A549 (cell line): ENCODE measurements at regions of chr12 and their contacts with region 1.

Region 1: GRCh38 chr12:1583421-1584078 is 10.8 kb downstream of the FBXL14 start:
- DNase-seq: peak; percentile 74 to 87
- ATAC-seq: peak; percentile 77 to 91; a peak in 5 of 6 replicates
- H3K4me3 ChIP-seq: no peak overlapping the region
- H3K27ac ChIP-seq: no peak overlapping the region
- H3K4me1 ChIP-seq: 0 out of 3 replicates have a peak, but pooled peaks cover 2% of the 10 kb centered on the region
- CTCF ChIP-seq: peak; percentile 96
- EP300 ChIP-seq: no peak
- POLR2A ChIP-seq: no peak
- RAD21 ChIP-seq: peak; percentile 97 to 98

Region 2: GRCh38 chr12:1108276-1108675 is 475.3 kb before region 1 on chr12:
- CTCF ChIA-PET with region 1: interaction called, 18 read pairs
- POLR2A ChIA-PET with region 1: no interaction called
- DNase-seq: no peak
- ATAC-seq: no peak
- H3K4me3 ChIP-seq: no peak overlapping the region
- H3K27ac ChIP-seq: no peak overlapping the region
- H3K4me1 ChIP-seq: no peaks in the 10 kb centered on the region
- CTCF ChIP-seq: no peak
- EP300 ChIP-seq: no peak
- POLR2A ChIP-seq: no peak
- RAD21 ChIP-seq: no peak

Region 3: DNA sequence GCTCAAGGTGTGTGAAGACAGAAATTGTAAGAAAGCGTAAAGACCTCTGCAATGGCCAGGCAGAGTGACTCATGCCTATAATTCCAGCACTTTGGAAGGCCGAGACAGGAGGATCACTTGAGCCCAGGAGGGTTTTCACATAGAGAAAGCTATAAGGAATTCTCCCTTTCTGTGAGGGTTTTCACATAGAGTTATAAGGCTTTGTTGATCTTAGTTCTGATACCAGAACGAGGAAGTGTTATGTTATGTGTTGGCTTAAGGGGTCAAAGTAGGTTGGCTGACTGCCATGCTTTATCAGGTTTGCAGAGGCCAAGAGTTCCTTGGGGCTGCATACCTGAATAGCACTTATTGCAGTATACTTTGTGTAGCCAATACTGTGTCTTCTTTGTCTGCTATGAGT is 453.4 kb before region 1 on chr12:
- CTCF ChIA-PET with region 1: interaction called, 22 read pairs
- POLR2A ChIA-PET with region 1: no interaction called
- DNase-seq: peak in 1 of 2 experiments; percentile 53
- ATAC-seq: peak in 1 of 2 experiments; percentile 57; a peak in 4 of 6 replicates
- H3K4me3 ChIP-seq: no peak overlapping the region
- H3K27ac ChIP-seq: no peak overlapping the region
- H3K4me1 ChIP-seq: peaks cover 7% of the 10 kb centered on the region; the same call in 1 of the 3 replicates
- CTCF ChIP-seq: no peak
- EP300 ChIP-seq: no peak
- POLR2A ChIP-seq: no peak
- RAD21 ChIP-seq: no peak

Region 4: DNA sequence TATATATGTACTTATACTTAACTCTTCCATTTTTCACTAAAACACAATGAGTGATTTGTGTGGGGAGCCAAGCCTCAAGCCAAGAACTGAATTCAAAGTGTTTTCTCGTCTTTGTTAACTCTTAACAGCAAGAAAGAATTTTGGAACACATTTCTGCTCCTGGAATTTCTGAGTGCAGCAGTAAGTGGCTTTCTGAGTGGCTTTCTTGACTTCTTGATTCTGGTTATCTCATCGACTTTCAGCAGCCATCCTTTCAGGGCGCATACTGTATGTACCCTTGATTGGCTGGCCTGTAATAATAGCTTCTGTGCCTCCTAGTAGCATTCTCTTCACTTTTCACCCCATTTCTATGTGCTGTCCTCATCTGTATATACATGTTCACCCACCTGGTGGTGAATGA is 146.6 kb before region 1 on chr12:
- CTCF ChIA-PET with region 1: no interaction called
- POLR2A ChIA-PET with region 1: no interaction called
- DNase-seq: no peak
- ATAC-seq: no peak
- H3K4me3 ChIP-seq: no peak overlapping the region
- H3K27ac ChIP-seq: no peak overlapping the region
- H3K4me1 ChIP-seq: no peaks in the 10 kb centered on the region
- CTCF ChIP-seq: no peak
- EP300 ChIP-seq: no peak
- POLR2A ChIP-seq: no peak
- RAD21 ChIP-seq: no peak

Region 5: GRCh38 chr12:1594261-1595025 is 10.9 kb after region 1 on chr12 and contains the start of gene FBXL14:
- CTCF ChIA-PET with region 1: interaction called, 30 read pairs
- POLR2A ChIA-PET with region 1: interaction called, 3 read pairs
- DNase-seq: peak; percentile 76 to 87
- ATAC-seq: peak; percentile 79 to 84
- H3K4me3 ChIP-seq: peak within 1 kb of the TSS; percentile 68
- H3K27ac ChIP-seq: peak within 1 kb of the TSS; percentile 91 to 99
- H3K4me1 ChIP-seq: peaks cover 38% of the 10 kb centered on the region
- CTCF ChIP-seq: no peak
- EP300 ChIP-seq: no peak
- POLR2A ChIP-seq: peak; percentile 65
- RAD21 ChIP-seq: no peak
- polyA plus RNA-seq, gene FBXL14: 6.7 and 8.2 TPM in 2 replicates

Region 6: GRCh38 chr12:1706633-1706981 is 123.1 kb after region 1 on chr12:
- CTCF ChIA-PET with region 1: no interaction called
- POLR2A ChIA-PET with region 1: no interaction called
- DNase-seq: peak in 1 of 2 experiments; percentile 22
- ATAC-seq: peak in 1 of 2 experiments; percentile 29; a peak in 3 of 6 replicates
- H3K4me3 ChIP-seq: no peak overlapping the region
- H3K27ac ChIP-seq: peak overlapping the region in 1 of 2 experiments; percentile 57; a peak in 3 of 6 replicates
- H3K4me1 ChIP-seq: peaks cover 42% of the 10 kb centered on the region
- CTCF ChIP-seq: no peak
- EP300 ChIP-seq: no peak
- POLR2A ChIP-seq: no peak
- RAD21 ChIP-seq: no peak

Region 7: GRCh38 chr12:1804545-1805332 is 221.2 kb after region 1 on chr12:
- CTCF ChIA-PET with region 1: no interaction called
- POLR2A ChIA-PET with region 1: no interaction called
- DNase-seq: peak; percentile 92 to 93
- ATAC-seq: peak; percentile 80 to 96
- H3K4me3 ChIP-seq: no peak overlapping the region
- H3K27ac ChIP-seq: peak overlapping the region; percentile 60 to 75
- H3K4me1 ChIP-seq: 0 out of 3 replicates have a peak, but pooled peaks cover 4% of the 10 kb centered on the region
- CTCF ChIP-seq: no peak
- EP300 ChIP-seq: no peak
- POLR2A ChIP-seq: peak; percentile 41
- RAD21 ChIP-seq: no peak

Region 8: GRCh38 chr12:1890810-1891209 is 307.3 kb after region 1 on chr12:
- CTCF ChIA-PET with region 1: no interaction called
- POLR2A ChIA-PET with region 1: no interaction called
- DNase-seq: no peak
- ATAC-seq: no peak
- H3K4me3 ChIP-seq: no peak overlapping the region
- H3K27ac ChIP-seq: no peak overlapping the region
- H3K4me1 ChIP-seq: no peaks in the 10 kb centered on the region
- CTCF ChIP-seq: no peak
- EP300 ChIP-seq: no peak
- POLR2A ChIP-seq: no peak
- RAD21 ChIP-seq: no peak